Activated CD4-positive, alpha-beta T cell treated with anti-CD3 and anti-CD28 coated beads for 36 hours (primary cell): ENCODE measurements at regions of chr11 and their contacts with region 1.

Region 1: GRCh38 chr11:93054881-93055280 is 85.4 kb downstream of the MTNR1B start:
- DNase-seq: peak; percentile 57
- ATAC-seq: peak; percentile 91
- H3K4me3 Mint-ChIP-seq: no peak overlapping the region
- H3K27ac Mint-ChIP-seq: peak overlapping the region; percentile 89
- H3K4me1 Mint-ChIP-seq: peaks cover 14% of the 10 kb centered on the region
- H3K27me3 Mint-ChIP-seq: peaks cover 9% of the 10 kb centered on the region

Region 2: DNA sequence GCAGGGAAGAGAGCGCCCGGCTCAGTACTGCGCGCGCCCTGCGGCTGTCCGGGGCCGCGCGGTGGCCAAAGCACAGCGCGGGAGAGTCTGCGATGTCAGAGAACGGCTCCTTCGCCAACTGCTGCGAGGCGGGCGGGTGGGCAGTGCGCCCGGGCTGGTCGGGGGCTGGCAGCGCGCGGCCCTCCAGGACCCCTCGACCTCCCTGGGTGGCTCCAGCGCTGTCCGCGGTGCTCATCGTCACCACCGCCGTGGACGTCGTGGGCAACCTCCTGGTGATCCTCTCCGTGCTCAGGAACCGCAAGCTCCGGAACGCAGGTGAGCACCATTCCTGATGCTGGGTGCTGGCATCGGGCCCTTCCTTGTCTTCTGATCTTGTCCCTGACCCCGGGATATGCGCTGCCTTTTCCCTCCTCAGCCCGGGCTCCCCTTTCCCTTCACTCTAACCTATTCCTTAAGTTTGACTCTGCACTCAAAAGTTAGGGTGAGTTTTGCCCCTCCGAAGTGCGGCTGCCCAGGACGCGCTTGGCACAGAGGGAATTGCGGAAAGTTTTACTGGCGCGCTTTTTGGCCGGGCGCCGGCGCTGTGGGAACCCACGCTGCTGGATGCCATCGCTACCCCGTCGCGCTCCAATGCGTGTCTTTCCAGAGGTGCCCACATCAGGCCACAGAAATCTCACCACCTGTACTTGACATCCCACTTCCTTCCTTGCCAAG is 85.1 kb before region 1 on chr11 and contains the start of gene MTNR1B:
- CTCF ChIA-PET with region 1: no interaction called
- POLR2A ChIA-PET with region 1: no interaction called
- intact Hi-C with region 1: loop called in 1 of 2 experiments (anchors 10 kb)
- DNase-seq: no peak
- ATAC-seq: no peak
- H3K4me3 Mint-ChIP-seq: no peak within 1 kb of the TSS
- H3K27ac Mint-ChIP-seq: no peak within 1 kb of the TSS
- H3K4me1 Mint-ChIP-seq: peaks cover 10% of the 10 kb centered on the region
- H3K27me3 Mint-ChIP-seq: peaks cover 37% of the 10 kb centered on the region
- total RNA-seq, gene MTNR1B: not detected

Region 3: GRCh38 chr11:93031386-93031785 is 23.5 kb before region 1 on chr11:
- CTCF ChIA-PET with region 1: interaction called, 3 read pairs
- POLR2A ChIA-PET with region 1: no interaction called
- intact Hi-C with region 1: loop called in 1 of 2 experiments (anchors 2 kb)
- DNase-seq: peak; percentile 34
- ATAC-seq: peak; percentile 49
- H3K4me3 Mint-ChIP-seq: no peak overlapping the region
- H3K27ac Mint-ChIP-seq: peak overlapping the region; percentile 49
- H3K4me1 Mint-ChIP-seq: peaks cover 4% of the 10 kb centered on the region
- H3K27me3 Mint-ChIP-seq: peaks cover 7% of the 10 kb centered on the region